IMR-90 (cell line): ENCODE measurements at regions of chr2 and their contacts with region 1.

Region 1: DNA sequence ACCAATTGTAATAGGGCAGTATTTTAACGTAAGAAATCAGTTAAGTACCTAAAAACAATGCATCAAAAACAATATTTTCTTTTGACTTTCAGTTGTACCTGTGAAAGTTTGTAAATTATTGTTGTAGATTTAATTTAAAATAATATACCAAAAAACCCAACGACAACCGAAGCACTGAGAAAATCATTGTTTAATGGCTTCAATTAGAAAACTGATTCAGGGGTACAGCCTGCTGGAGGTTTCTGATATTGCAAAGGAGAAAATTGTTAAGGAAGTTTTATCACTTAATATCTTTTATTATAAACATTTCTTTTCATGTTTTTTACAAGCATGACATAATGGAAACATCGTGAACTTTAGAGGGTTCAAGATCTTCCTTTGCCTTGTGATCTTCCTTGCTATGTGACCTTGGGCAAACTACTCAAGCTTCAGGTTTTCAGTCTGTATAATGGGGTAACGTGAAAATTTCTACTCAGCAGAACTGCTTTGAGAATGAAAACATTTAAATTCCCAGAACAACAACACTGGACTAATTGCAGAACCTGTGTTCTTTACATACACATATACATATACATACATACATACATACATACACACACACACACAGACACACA is 76.3 kb upstream of the GLS start:
- DNase-seq: peak; percentile 49
- ATAC-seq: peak; percentile 76
- H3K4me3 ChIP-seq: no peak overlapping the region
- H3K27ac ChIP-seq: no peak overlapping the region
- H3K4me1 ChIP-seq: no peaks in the 10 kb centered on the region; the same call in 1 of the 2 replicates
- H3K27me3 ChIP-seq: no peaks in the 10 kb centered on the region
- CTCF ChIP-seq: peak; percentile 75
- POLR2A ChIP-seq: no peak
- RAD21 ChIP-seq: peak; percentile 78

Region 2: GRCh38 chr2:190352668-190353536 is 451.4 kb before region 1 on chr2:
- CTCF ChIA-PET with region 1: no interaction called
- POLR2A ChIA-PET with region 1: no interaction called
- dilution Hi-C with region 1: no loop called
- in situ Hi-C with region 1: no loop called
- intact Hi-C with region 1: loop called (anchors 10 kb)
- DNase-seq: no peak
- ATAC-seq: no peak
- H3K4me3 ChIP-seq: no peak overlapping the region
- H3K27ac ChIP-seq: no peak overlapping the region
- H3K4me1 ChIP-seq: peaks cover 4% of the 10 kb centered on the region; the same call in 1 of the 2 replicates
- H3K27me3 ChIP-seq: no peaks in the 10 kb centered on the region
- CTCF ChIP-seq: no peak
- POLR2A ChIP-seq: no peak
- RAD21 ChIP-seq: no peak